Posterior cingulate gyrus (tissue), 11 donors: ENCODE measurements at regions of chr16 and their contacts with region 1.

Region 1: GRCh38 chr16:3880623-3881498 is at the start of gene CREBBP:
- DNase-seq: peak; percentile 75 to 98 (median 78)

Region 2: GRCh38 chr16:3542601-3543373 is 338.1 kb before region 1 on chr16:
- intact Hi-C with region 1: no loop called
- DNase-seq: no peak

Region 3: DNA sequence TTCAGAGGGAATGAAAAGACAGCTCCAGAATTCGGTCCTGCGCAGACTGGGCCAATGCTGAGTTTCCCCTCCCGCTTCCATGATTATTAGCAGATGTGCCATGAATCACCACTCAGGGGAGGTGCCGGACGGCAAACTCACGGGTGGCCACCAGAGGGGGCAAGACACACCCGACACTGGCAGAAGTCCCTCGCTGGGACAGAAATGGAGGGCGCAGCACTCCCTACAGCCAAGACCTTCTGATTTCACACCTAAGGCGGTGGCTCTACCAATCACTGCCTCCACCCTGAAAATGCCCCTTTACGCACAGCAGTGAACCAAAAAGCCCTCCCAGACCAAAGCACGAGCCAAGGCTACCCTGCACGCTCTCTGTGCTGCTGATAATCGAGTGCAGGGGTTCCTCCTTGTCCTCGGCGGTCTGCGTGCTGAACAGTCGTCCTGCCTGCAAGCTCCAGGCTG is 190.4 kb before region 1 on chr16:
- intact Hi-C with region 1: loop called (anchors 1 kb)
- DNase-seq: peak; percentile 82 to 99 (median 94)

Region 4: DNA sequence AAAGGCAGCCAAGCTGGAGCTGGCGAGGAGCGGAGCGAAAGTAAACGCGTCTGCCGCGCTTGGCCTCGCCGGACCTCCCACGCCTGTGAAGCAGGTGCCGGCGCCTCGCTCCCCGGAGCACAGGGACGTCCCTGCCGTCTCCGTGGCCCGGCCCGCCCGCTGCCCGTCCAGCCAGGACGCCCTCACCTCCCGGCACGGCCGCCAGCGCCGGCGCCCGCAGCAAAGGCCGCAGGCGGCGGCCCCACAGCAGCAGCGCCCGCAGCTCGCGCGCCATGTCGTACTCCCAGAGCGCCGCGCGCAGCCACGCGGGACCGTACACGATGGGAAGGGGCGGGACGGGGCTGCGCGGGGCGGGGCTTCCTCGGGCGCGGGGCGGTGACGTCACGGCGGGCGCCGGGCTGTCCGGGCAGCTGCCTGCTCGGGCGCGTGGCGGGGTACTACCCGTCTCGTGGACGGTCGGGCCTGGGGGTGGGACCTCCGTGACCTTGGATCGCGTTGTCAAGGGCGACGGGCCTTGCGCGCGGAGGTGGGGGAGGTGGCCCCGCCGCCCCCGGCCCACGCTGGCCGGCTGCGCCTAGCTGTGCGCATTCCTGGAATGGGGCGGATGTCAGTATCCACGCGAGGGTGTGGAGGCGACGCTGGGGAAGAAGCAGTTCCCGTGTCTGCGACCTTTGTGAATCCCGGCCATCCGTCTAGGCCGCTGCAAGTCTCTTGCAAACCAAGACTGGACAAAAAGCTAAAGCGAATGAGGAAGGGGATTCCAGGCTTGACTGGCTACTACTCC is 163.4 kb before region 1 on chr16 and contains the start of gene TRAP1:
- intact Hi-C with region 1: loop called (anchors 1 kb)
- DNase-seq: peak; percentile 82 to 99 (median 92)

Region 5: DNA sequence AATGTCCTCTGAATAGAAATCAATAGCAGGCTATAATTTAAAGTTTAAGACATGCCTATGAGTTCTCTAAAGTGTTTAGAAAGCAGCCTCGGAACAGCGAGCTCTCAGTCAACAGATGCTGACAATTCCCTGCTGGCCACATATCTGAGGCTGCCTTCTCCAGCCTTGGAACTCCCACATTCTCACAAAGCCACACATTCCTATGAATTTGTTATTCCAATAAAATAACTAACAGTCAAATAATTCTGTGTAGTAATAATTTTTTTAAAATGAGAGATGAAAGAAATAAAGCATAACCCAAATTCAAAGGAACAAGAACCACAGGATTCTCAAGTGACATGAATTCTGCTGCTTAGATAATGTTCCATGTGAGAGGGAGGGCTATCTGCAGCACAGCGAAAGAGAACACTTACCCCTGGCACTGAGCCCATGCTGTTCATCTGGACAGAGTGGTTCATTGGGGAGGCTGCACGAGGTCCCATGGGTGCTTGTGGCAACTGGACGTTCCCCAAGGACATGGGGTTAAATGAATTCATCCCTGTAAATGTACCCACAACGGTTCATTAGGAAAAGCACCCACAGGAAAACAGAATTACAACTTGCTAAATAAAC is 106.6 kb before region 1 on chr16:
- intact Hi-C with region 1: loop called (anchors 10 kb)
- DNase-seq: peak in 5 of 10 donors; percentile 34 to 71 (median 38)

Region 6: DNA sequence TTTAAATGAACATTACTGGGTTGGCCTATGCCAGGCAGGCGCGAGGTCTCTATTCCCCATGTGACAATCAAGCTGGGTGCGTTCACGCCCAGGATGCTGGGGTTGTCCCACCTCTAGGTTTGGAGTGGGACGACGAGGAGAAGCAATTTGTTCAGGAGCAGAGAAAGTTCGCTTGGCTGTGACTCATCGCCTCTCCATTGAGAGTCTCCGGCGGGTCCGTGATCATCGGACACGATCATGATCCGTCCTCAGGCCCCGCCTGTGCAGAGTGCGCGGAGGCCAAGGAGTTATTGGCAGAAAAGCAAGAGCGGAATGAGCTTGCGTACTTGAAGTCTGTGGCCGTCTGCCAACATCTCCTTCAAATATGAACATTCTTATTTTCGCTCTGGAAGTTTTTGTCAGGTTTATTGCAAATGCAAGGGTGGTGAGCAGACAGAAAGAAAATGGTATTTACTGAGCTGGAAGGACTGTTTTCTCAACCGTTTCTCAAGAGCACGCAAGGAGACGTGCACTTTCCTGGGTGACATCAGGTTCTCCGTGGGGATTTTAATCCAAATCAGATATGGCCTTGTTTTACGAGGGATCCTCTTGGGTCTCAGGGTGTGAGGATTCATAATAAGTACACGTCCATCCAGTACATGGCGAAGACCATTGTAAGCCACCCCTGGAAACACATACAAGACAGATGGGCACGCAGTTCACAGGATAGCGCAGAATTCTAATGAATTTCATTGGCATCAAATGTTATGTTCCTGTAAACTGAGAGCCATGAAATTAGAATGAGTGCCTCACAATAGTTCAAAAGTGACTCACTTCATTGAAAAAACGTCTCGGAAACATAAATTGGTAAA is 69.7 kb after region 1 on chr16:
- intact Hi-C with region 1: no loop called
- DNase-seq: peak in 2 of 10 donors; percentile 74 to 80

Region 7: DNA sequence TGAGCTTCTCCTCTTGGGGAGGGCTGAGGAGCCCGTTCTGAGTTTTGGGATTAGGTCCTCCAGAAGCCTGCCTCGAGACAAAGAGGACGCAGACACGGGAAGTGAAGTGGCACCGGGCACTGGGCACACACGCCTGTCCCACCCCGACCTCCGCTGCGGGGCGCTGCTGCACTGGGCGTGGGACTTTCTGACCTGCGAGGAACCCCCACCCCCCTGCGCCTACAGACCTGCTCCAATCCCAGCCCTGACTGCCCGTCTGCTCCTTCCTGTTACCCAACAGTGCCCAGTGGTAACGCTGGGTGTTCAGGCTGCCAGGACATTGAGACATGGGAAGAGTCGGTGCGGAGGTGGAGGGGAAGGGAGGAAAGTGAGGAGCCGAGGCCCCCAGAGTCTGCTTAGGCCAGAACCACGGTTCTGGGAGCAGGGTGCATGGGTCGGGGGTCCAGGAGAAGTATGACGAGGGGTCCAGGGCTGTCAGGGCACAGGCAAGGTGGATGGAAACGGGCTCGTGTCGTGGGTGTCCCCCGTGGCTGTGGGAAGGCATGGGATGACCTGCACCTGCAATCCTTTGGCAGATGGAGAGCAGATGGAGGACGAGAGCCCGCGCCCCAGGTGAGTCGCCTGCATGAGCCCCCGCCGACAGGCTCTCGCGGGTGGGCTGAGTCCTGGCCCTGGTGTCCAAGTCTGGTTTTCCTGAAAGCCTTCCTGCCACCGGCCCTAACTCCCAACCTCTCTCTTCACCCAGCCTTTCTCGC is 111.6 kb after region 1 on chr16:
- intact Hi-C with region 1: no loop called
- DNase-seq: peak in 3 of 10 donors; percentile 39 to 76 (median 71)